Activated CD4-positive, alpha-beta memory T cell treated with anti-CD3 and anti-CD28 coated beads, Interleukin-2, amount 10 ng/mL, durations not matched to agents 7 days and 5 days (primary cell): ENCODE measurements at regions of chr19 and their contacts with region 1.

Region 1: DNA sequence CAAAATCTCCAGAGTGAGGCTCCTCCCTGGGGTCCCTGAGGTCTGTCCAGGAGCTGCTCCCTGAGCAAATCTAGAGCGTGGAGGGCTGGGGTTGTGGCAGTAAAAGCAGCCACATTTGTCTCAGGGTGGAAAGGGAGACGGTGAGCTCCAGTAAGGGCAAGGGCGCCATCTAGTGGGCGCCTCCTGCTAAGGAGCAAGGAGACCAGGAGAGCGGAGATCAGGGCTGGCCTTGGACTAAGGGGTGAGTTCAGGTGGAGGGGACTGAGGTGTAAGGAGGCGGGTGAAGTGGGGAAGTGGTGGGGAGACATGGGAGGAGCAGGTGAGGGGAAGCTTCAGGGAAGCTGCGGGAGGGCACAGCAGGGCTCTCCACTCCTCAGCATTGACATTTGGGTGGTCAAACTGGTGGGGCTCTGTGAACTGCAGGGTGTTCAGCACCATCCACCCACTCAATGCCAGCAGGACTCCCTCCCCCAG is 5.3 kb upstream of the CEACAM21 start:
- DNase-seq: peak; percentile 87
- H3K4me3 Mint-ChIP-seq: no peak overlapping the region
- H3K27ac Mint-ChIP-seq: no peak overlapping the region
- H3K4me1 Mint-ChIP-seq: peaks cover 31% of the 10 kb centered on the region
- H3K27me3 Mint-ChIP-seq: no peaks in the 10 kb centered on the region

Region 2: DNA sequence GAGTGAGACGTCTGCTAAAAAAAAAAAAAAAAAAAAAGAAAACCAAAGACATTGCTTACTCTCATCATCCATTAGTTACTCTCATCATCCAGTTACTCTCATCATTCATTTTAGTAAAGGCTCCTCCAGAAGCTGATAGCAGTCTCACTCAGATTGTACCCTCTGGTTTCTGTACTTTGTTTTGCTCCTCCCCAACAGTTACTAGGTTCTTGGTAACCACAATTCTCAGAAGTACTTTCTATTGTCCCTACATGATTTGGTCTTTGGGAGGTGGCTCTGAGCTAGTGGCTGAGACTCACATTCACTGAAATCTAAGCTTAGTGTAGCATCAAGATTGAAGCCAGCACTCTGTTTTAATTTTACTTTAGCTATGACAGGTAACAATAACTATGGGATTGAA is 113.4 kb before region 1 on chr19:
- CTCF ChIA-PET with region 1: interaction called, 91 read pairs
- POLR2A ChIA-PET with region 1: interaction called, 4 read pairs
- DNase-seq: no peak
- H3K4me3 Mint-ChIP-seq: peak overlapping the region; percentile 45
- H3K27ac Mint-ChIP-seq: peak overlapping the region; percentile 78
- H3K4me1 Mint-ChIP-seq: peaks cover 45% of the 10 kb centered on the region
- H3K27me3 Mint-ChIP-seq: peaks cover 3% of the 10 kb centered on the region

Region 3: DNA sequence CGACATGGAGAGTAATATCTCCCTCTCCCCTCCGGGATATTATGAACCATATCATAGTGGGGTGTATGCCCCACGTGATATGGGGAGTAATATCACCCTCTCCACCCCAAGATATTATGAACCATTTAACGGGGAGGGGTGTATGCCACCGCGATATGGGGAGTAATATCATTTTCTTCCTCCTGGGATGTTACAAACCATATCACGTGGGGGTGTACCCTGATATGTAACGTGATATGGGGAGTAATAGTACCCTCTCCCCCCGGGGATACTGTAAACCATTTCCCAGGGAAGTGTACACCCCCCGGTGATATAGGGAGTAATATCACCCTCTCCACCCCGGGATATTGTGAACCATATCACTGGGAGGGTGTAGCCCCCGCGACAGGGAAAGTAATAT is 65.6 kb before region 1 on chr19:
- CTCF ChIA-PET with region 1: no interaction called
- POLR2A ChIA-PET with region 1: no interaction called
- DNase-seq: no peak
- H3K4me3 Mint-ChIP-seq: no peak overlapping the region
- H3K27ac Mint-ChIP-seq: no peak overlapping the region
- H3K4me1 Mint-ChIP-seq: no peaks in the 10 kb centered on the region
- H3K27me3 Mint-ChIP-seq: peaks cover 22% of the 10 kb centered on the region

Region 4: GRCh38 chr19:41541990-41542584 is 28.6 kb before region 1 on chr19:
- CTCF ChIA-PET with region 1: interaction called, 193 read pairs
- POLR2A ChIA-PET with region 1: interaction called, 57 read pairs
- DNase-seq: peak; percentile 86
- H3K4me3 Mint-ChIP-seq: peak overlapping the region; percentile 18
- H3K27ac Mint-ChIP-seq: peak overlapping the region; percentile 8
- H3K4me1 Mint-ChIP-seq: peaks cover 58% of the 10 kb centered on the region
- H3K27me3 Mint-ChIP-seq: no peaks in the 10 kb centered on the region

Region 5: GRCh38 chr19:41548954-41549688 is 21.6 kb before region 1 on chr19:
- CTCF ChIA-PET with region 1: interaction called, 193 read pairs
- POLR2A ChIA-PET with region 1: interaction called, 57 read pairs
- DNase-seq: peak; percentile 88
- H3K4me3 Mint-ChIP-seq: peak overlapping the region; percentile 99
- H3K27ac Mint-ChIP-seq: peak overlapping the region; percentile 99
- H3K4me1 Mint-ChIP-seq: peaks cover 62% of the 10 kb centered on the region
- H3K27me3 Mint-ChIP-seq: no peaks in the 10 kb centered on the region

Region 6: DNA sequence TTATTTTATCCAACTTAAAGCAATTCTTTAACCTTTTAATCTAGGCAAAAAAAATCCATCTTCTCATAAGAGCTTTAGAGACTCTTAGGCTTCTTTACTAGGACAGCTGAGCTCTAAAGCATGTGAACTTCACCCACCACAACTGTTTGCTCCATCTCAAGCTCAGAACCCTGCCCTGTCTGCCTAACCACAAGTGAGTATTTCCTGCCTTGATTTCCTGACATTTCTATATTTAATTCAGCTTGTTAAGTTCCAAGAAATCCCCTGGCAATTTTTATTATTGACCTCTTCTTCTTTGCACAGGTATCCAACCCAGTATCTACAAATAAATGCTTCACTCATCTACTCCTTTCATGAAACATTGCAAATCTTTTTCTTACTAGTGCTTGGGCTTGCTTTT is 15.8 kb before region 1 on chr19:
- CTCF ChIA-PET with region 1: interaction called, 193 read pairs
- POLR2A ChIA-PET with region 1: interaction called, 57 read pairs
- DNase-seq: peak; percentile 64
- H3K4me3 Mint-ChIP-seq: peak overlapping the region; percentile 58
- H3K27ac Mint-ChIP-seq: peak overlapping the region; percentile 99
- H3K4me1 Mint-ChIP-seq: peaks cover 68% of the 10 kb centered on the region
- H3K27me3 Mint-ChIP-seq: no peaks in the 10 kb centered on the region

Region 7: GRCh38 chr19:41597600-41598041 is 26.9 kb after region 1 on chr19:
- CTCF ChIA-PET with region 1: interaction called, 36 read pairs
- POLR2A ChIA-PET with region 1: interaction called, 5 read pairs
- DNase-seq: peak; percentile 80
- H3K4me3 Mint-ChIP-seq: no peak overlapping the region
- H3K27ac Mint-ChIP-seq: no peak overlapping the region
- H3K4me1 Mint-ChIP-seq: peaks cover 15% of the 10 kb centered on the region
- H3K27me3 Mint-ChIP-seq: peaks cover 27% of the 10 kb centered on the region